ENCODE measurements at regions of chr18 and their contacts with region 1.

Region 1: GRCh38 chr18:8426401-8426800 is 182.8 kb upstream of the RAB12 start:
- DNase-seq: peak in 1 of 2 experiments; percentile 89
- H3K4me3 ChIP-seq: no peak overlapping the region
- H3K27ac ChIP-seq: no peak overlapping the region
- H3K4me1 ChIP-seq: peaks cover 4 to 12% (median 4%) of the 10 kb centered on the region in 4 experiments; a peak in 6 of 7 replicates
- H3K27me3 ChIP-seq: no peaks in the 10 kb centered on the region; a peak in 1 of 7 replicates
- CTCF ChIP-seq: peak; percentile 65 to 80 (median 76)
- EP300 ChIP-seq: no peak
- POLR2A ChIP-seq: no peak
- RAD21 ChIP-seq: peak; percentile 49 to 67

Region 2: DNA sequence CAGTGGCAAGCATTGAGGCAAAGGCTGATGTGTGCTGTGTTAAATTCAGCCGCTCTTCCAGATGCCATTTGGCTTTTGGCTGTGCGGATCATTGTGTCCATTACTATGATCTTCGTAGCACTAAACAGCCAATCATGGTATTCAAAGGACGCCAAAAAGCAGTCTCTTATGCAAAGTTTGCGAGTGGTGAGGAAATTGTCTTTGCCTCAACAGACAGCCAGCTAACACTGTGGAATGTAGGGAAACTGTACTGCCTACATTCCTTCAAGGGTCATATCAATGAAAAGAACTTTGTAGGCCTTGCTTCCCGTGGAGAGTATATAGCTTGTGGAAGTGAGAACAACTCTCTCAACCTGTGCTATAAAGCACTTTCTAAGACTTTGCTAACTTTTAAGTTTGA is 12.6 kb before region 1 on chr18:
- CTCF ChIA-PET with region 1: interaction called, 10 read pairs
- POLR2A ChIA-PET with region 1: no interaction called
- DNase-seq: no peak
- H3K4me3 ChIP-seq: no peak overlapping the region
- H3K27ac ChIP-seq: no peak overlapping the region
- H3K4me1 ChIP-seq: no peaks in the 10 kb centered on the region
- H3K27me3 ChIP-seq: no peaks in the 10 kb centered on the region
- CTCF ChIP-seq: no peak
- EP300 ChIP-seq: no peak
- POLR2A ChIP-seq: no peak
- RAD21 ChIP-seq: no peak

Region 3: GRCh38 chr18:8439055-8439454 is 12.7 kb after region 1 on chr18:
- CTCF ChIA-PET with region 1: interaction called, 12 read pairs
- POLR2A ChIA-PET with region 1: no interaction called
- DNase-seq: no peak
- H3K4me3 ChIP-seq: no peak overlapping the region
- H3K27ac ChIP-seq: no peak overlapping the region
- H3K4me1 ChIP-seq: no peaks in the 10 kb centered on the region
- H3K27me3 ChIP-seq: no peaks in the 10 kb centered on the region
- CTCF ChIP-seq: no peak
- EP300 ChIP-seq: no peak
- POLR2A ChIP-seq: no peak
- RAD21 ChIP-seq: no peak